Heart right ventricle (tissue), 16 donors: ENCODE measurements at regions of chr10 and their contacts with region 1.

Region 1: GRCh38 chr10:97025613-97026242 is 160.0 kb downstream of the SLIT1 start:
- DNase-seq: peak in 1 of 2 donors; percentile 37
- ATAC-seq: peak in 5 of 8 donors; percentile 25 to 48 (median 35)
- H3K4me3 ChIP-seq: no peak overlapping the region
- H3K27ac ChIP-seq: peak overlapping the region in 3 of 10 donors; percentile 15 to 78 (median 21)
- H3K4me1 ChIP-seq: peaks cover 9 to 33% (median 23%) of the 10 kb centered on the region in 9 donors
- H3K27me3 ChIP-seq: no peaks in the 10 kb centered on the region
- CTCF ChIP-seq: peak; percentile 28 to 73 (median 66)

Region 2: GRCh38 chr10:96374985-96375830 is 650.5 kb before region 1 on chr10:
- intact Hi-C with region 1: loop called in 3 of 10 experiments (anchors 10 kb)
- DNase-seq: peak; percentile 84 to 88
- ATAC-seq: peak; percentile 83 to 90 (median 86)
- H3K4me3 ChIP-seq: peak overlapping the region in 9 of 10 donors; percentile 30 to 58 (median 50)
- H3K27ac ChIP-seq: peak overlapping the region in 2 of 10 donors; percentile 15 to 30
- H3K4me1 ChIP-seq: peaks cover 2 to 38% (median 14%) of the 10 kb centered on the region in 9 donors
- H3K27me3 ChIP-seq: no peaks in the 10 kb centered on the region
- CTCF ChIP-seq: peak; percentile 91 to 100 (median 98)

Region 3: GRCh38 chr10:96642973-96643372 is 382.8 kb before region 1 on chr10:
- intact Hi-C with region 1: loop called in 1 of 10 experiments (anchors 10 kb)
- DNase-seq: peak; percentile 62 to 70
- ATAC-seq: peak in 4 of 8 donors; percentile 61 to 73 (median 66)
- H3K4me3 ChIP-seq: no peak overlapping the region
- H3K27ac ChIP-seq: no peak overlapping the region
- H3K4me1 ChIP-seq: peaks cover 0 to 34% (median 0%) of the 10 kb centered on the region in 9 donors
- H3K27me3 ChIP-seq: no peaks in the 10 kb centered on the region
- CTCF ChIP-seq: peak in 7 of 9 donors; percentile 33 to 64 (median 46)

Region 4: DNA sequence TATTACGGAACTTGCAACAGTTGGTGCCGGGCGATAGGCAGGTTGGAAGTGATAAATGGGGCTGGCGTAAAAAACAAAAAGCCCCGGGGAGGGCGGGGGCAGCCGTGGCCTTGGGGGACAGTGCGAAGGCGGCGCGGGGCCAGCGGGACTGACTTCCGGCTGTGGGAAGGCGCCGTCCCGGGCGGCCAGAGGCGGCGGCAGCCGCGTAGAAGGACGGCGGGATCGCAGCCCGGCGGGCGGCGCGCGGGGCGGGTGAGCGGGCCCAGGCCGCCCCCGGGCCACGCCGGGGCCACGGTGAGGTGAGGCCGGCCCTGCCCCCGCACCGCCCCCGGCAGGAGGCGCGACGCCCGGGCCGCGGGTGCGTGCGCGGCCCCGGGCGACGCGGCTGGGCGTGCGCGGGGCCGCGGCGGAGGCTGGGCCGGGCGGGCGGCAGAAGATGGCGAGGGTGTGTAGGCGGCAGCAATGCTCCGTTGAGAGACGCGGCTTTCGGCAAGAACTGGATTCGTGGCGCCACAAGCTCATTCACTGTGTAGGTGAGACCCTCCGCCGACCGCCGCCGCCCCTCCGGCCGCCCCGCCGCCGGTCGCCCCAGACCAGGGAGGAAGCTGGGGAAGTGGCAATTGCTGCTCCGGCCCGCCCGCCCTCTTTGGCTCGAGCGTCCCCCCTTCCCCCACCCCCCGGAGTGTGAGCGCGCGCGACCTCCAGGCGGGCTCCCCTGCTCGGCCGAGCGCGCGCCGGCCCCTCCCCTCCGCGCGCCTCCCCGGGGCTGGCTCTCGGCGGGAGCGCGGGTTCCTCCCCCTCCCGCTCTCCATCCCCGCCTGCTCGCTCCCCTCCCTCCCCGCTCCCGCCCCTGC is 193.6 kb before region 1 on chr10 and contains the start of gene LCOR:
- intact Hi-C with region 1: loop called in 6 of 10 experiments (anchors 2 to 10 kb)
- DNase-seq: peak; percentile 87 to 88
- ATAC-seq: peak; percentile 90 to 95 (median 91)
- H3K4me3 ChIP-seq: peak within 1 kb of the TSS; percentile 77 to 97 (median 92)
- H3K27ac ChIP-seq: peak within 1 kb of the TSS; percentile 92 to 99 (median 95)
- H3K4me1 ChIP-seq: peaks cover 3 to 58% (median 47%) of the 10 kb centered on the region in 9 donors
- H3K27me3 ChIP-seq: no peaks in the 10 kb centered on the region
- CTCF ChIP-seq: peak in 1 of 9 donors; percentile 37
- total RNA-seq, gene LCOR: 18.8 to 28.8 (median 24.3) TPM

Region 5: GRCh38 chr10:96919785-96920430 is 105.8 kb before region 1 on chr10:
- intact Hi-C with region 1: loop called in 2 of 10 experiments (anchors 5 to 10 kb)
- DNase-seq: no peak
- ATAC-seq: no peak
- H3K4me3 ChIP-seq: no peak overlapping the region
- H3K27ac ChIP-seq: peak overlapping the region in 2 of 10 donors; percentile 45 to 52
- H3K4me1 ChIP-seq: peaks cover 0 to 58% (median 29%) of the 10 kb centered on the region in 9 donors
- H3K27me3 ChIP-seq: no peaks in the 10 kb centered on the region
- CTCF ChIP-seq: no peak

Region 6: DNA sequence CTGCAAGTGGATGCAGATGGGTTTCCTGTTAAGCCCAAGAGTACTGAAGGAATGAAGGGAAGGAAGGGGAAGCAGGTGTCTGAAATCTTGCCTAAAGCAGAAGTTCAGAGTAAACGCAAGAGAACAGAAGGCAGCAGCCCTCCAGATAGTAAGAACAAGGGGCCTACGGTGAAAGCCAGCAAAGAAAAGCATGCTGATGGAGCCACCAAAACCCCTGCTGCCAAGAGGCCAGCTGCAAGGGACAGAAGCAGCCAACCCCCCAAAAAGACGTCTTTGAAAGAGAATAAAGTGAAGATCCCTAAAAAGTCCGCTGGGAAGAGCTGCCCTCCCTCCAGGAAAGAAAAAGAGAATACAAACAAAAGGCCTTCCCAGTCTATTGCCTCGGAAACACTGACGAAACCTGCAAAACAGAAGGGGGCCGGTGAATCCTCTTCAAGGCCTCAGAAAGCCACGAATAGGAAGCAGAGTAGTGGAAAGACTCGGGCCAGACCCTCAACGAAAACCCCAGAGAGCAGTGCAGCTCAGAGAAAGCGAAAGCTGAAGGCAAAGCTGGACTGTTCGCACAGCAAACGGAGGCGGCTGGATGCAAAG is 41.1 kb before region 1 on chr10:
- intact Hi-C with region 1: no loop called
- DNase-seq: no peak
- ATAC-seq: peak in 1 of 8 donors; percentile 25
- H3K4me3 ChIP-seq: no peak overlapping the region
- H3K27ac ChIP-seq: no peak overlapping the region
- H3K4me1 ChIP-seq: peaks cover 0 to 4% (median 0%) of the 10 kb centered on the region in 9 donors
- H3K27me3 ChIP-seq: no peaks in the 10 kb centered on the region
- CTCF ChIP-seq: no peak

Region 7: GRCh38 chr10:96998329-96998888 is 27.3 kb before region 1 on chr10:
- intact Hi-C with region 1: loop called in 1 of 10 experiments (anchors 1 kb)
- DNase-seq: no peak
- ATAC-seq: no peak
- H3K4me3 ChIP-seq: no peak overlapping the region
- H3K27ac ChIP-seq: no peak overlapping the region
- H3K4me1 ChIP-seq: peaks cover 0 to 21% (median 13%) of the 10 kb centered on the region in 9 donors
- H3K27me3 ChIP-seq: no peaks in the 10 kb centered on the region
- CTCF ChIP-seq: no peak

Region 8: DNA sequence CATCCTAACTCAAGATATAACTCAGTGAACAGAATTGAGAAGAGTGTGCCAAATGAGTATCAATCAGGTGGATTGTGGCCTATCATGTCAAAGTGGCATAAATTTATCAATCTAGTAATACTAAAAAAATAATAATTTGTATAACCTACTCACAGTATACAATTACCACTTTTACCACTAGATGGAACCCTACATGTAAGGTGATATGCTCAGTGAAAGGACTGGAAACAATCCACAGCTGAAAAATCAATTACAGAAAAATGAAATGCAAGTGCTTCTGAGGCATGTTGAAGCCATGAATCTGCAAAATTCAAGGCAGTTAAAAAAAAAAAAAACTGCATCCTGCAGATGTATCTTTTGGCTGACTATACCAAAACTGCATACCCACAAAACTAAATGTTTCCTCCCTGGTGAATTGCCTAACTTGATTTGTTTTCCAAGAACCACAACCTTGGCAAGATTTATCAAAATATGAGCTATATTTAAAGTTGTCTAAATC is 252.8 kb after region 1 on chr10:
- intact Hi-C with region 1: no loop called
- DNase-seq: no peak
- ATAC-seq: peak; percentile 85 to 98 (median 92)
- H3K4me3 ChIP-seq: peak overlapping the region in 1 of 10 donors; percentile 2
- H3K27ac ChIP-seq: peak overlapping the region in 6 of 10 donors; percentile 31 to 72 (median 48)
- H3K4me1 ChIP-seq: peaks cover 0 to 25% (median 20%) of the 10 kb centered on the region in 9 donors
- H3K27me3 ChIP-seq: no peaks in the 10 kb centered on the region
- CTCF ChIP-seq: peak; percentile 56 to 84 (median 71)